ENCODE measurements at regions of chr11 and their contacts with region 1.

Region 1: GRCh38 chr11:13772223-13773046 is 104.0 kb downstream of the FAR1 start:
- DNase-seq: no peak
- H3K4me3 Mint-ChIP-seq: no peak overlapping the region
- H3K27ac Mint-ChIP-seq: no peak overlapping the region
- H3K4me1 Mint-ChIP-seq: peaks cover 3% of the 10 kb centered on the region
- H3K27me3 Mint-ChIP-seq: peaks cover 6% of the 10 kb centered on the region

Region 2: DNA sequence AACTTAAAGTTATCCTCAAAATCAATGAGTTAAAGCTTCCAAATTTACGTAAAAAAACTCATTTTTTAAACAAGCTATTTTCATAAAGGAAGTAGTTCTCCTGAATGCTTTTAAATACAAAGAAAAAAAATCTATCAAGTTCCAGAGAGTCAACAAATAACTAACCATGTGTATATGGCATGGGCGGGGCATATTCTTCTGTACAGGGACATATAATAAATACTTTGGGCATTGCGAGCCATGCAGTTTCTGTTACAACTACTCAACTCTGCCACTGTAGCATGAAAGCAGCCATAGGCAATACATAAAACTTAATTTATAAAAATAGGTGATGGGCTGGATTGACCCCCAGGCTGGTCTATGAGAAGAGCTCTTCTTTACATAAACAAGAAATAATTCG is 367.2 kb before region 1 on chr11:
- CTCF ChIA-PET with region 1: no interaction called
- POLR2A ChIA-PET with region 1: no interaction called
- DNase-seq: no peak
- H3K4me3 Mint-ChIP-seq: no peak overlapping the region
- H3K27ac Mint-ChIP-seq: no peak overlapping the region
- H3K4me1 Mint-ChIP-seq: no peaks in the 10 kb centered on the region
- H3K27me3 Mint-ChIP-seq: no peaks in the 10 kb centered on the region

Region 3: DNA sequence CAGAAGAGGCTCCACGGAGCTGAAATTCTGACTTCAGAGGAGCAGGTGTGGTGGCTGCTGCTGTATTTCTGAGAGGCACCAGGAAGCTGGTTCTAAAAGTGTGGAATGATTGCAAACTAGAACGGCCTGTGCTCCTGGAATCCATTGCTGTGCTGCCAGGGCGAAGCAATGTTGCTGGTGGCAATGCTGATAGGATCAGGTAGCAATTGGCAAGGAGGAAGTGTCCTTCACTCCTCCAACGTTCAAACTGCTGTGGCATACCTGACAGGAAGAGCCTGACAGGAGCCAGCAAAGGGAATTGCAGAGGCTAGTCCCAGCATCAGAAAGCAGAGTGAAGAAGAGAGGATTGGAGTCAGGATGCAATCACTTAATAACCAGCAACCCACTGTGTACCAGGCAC is 14.2 kb after region 1 on chr11:
- CTCF ChIA-PET with region 1: interaction called, 12 read pairs
- POLR2A ChIA-PET with region 1: no interaction called
- DNase-seq: no peak
- H3K4me3 Mint-ChIP-seq: no peak overlapping the region
- H3K27ac Mint-ChIP-seq: no peak overlapping the region
- H3K4me1 Mint-ChIP-seq: peaks cover 3% of the 10 kb centered on the region
- H3K27me3 Mint-ChIP-seq: peaks cover 4% of the 10 kb centered on the region

Region 4: GRCh38 chr11:13800901-13801300 is 28.5 kb after region 1 on chr11:
- CTCF ChIA-PET with region 1: no interaction called
- POLR2A ChIA-PET with region 1: no interaction called
- DNase-seq: no peak
- H3K4me3 Mint-ChIP-seq: no peak overlapping the region
- H3K27ac Mint-ChIP-seq: no peak overlapping the region
- H3K4me1 Mint-ChIP-seq: no peaks in the 10 kb centered on the region
- H3K27me3 Mint-ChIP-seq: peaks cover 1% of the 10 kb centered on the region

Region 5: DNA sequence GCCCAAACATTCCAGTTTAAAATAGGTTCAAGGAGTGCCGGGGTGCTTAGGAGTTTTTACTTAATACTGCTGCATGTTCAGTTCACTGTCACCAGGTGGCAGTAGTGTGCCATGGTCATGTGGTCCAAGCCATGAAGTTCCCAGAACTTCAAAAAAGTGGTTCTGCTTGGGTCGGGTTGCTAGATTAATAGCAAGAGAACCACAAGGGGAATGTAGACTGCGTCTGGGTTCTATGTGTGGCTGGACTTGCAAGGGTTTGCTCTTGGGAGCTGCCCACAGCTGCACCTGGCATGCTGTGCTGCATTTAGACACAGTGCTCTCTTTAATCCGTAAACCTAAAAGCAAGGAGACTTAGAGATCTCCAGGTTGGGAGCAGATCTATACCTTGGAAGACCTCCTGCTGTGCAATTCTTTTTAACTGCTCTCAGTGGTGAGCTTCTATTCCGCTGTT is 183.6 kb after region 1 on chr11:
- CTCF ChIA-PET with region 1: interaction called, 12 read pairs
- POLR2A ChIA-PET with region 1: no interaction called
- DNase-seq: peak; percentile 59
- H3K4me3 Mint-ChIP-seq: no peak overlapping the region
- H3K27ac Mint-ChIP-seq: no peak overlapping the region
- H3K4me1 Mint-ChIP-seq: peaks cover 1% of the 10 kb centered on the region
- H3K27me3 Mint-ChIP-seq: peaks cover 38% of the 10 kb centered on the region

Region 6: DNA sequence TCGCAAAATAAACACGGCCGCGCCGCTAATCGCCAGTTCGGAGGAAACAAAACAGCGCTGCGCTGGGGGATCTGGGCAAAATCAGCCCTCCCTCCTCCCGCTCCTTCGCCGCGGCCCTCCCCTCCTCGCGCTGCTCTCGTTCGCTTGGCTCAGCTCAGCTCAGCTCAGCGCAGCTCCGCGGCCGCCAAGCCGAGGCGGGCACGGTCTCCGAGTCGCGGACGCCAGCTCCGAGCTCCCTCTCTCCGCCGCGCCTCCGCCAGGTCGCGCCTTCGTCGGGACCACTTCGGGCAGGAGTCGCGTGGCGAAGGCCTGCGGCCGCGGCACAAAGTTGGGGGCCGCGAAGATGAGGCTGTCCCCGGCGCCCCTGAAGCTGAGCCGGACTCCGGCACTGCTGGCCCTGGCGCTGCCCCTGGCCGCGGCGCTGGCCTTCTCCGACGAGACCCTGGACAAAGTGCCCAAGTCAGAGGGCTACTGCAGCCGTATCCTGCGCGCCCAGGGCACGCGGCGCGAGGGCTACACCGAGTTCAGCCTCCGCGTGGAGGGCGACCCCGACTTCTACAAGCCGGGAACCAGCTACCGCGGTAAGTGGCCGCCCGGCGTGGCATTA is 190.2 kb after region 1 on chr11 and contains the start of gene SPON1:
- CTCF ChIA-PET with region 1: interaction called, 12 read pairs
- POLR2A ChIA-PET with region 1: no interaction called
- DNase-seq: peak; percentile 33
- H3K4me3 Mint-ChIP-seq: peak within 1 kb of the TSS; percentile 47
- H3K27ac Mint-ChIP-seq: no peak within 1 kb of the TSS
- H3K4me1 Mint-ChIP-seq: peaks cover 21% of the 10 kb centered on the region
- H3K27me3 Mint-ChIP-seq: peaks cover 79% of the 10 kb centered on the region
- total RNA-seq, gene SPON1: 0.45 to 0.68 TPM

Region 7: DNA sequence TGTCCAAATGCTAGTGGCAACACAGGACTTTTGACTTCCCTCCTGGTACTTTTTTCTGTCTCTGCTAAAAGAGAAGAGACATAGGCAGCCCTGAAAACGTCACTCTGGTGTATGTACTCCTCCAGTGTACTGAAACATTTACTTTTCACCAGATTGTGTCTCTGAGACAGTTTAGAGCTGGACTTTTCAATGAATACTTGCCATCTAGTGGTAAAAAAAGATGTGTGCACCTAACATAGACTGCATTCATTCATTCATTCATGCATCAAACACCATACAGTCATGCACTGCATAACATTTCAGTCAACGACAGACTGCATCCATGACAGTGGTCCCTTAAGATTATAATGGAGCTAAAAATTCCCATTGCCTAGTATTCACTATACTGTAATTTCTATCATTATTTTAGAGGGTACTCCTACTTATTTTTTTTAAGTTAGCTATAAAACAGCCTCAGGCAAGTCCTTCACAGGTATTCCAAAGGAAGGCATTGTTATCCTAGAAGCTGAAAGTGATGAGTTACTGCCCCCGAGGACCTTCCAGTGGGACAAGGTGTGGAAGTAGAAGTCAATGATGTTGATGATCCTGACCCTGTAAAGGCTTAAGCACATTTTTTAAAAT is 376.3 kb after region 1 on chr11:
- CTCF ChIA-PET with region 1: interaction called, 34 read pairs
- POLR2A ChIA-PET with region 1: no interaction called
- DNase-seq: no peak
- H3K4me3 Mint-ChIP-seq: no peak overlapping the region
- H3K27ac Mint-ChIP-seq: no peak overlapping the region
- H3K4me1 Mint-ChIP-seq: peaks cover 3% of the 10 kb centered on the region
- H3K27me3 Mint-ChIP-seq: peaks cover 3% of the 10 kb centered on the region

Region 8: GRCh38 chr11:14249121-14249963 is 476.9 kb after region 1 on chr11:
- CTCF ChIA-PET with region 1: interaction called, 27 read pairs
- POLR2A ChIA-PET with region 1: no interaction called
- DNase-seq: peak; percentile 77
- H3K4me3 Mint-ChIP-seq: peak overlapping the region; percentile 5
- H3K27ac Mint-ChIP-seq: no peak overlapping the region
- H3K4me1 Mint-ChIP-seq: peaks cover 23% of the 10 kb centered on the region
- H3K27me3 Mint-ChIP-seq: peaks cover 11% of the 10 kb centered on the region